Common myeloid progenitor, CD34-positive (primary cell): ENCODE measurements at regions of chr9 and their contacts with region 1.

Region 1: GRCh38 chr9:83636813-83637212 is 13.9 kb downstream of the IDNK start:
- DNase-seq: no peak
- H3K4me3 ChIP-seq: no peak overlapping the region
- H3K27ac ChIP-seq: no peak overlapping the region
- H3K4me1 ChIP-seq: no peaks in the 10 kb centered on the region
- H3K27me3 ChIP-seq: no peaks in the 10 kb centered on the region

Region 2: DNA sequence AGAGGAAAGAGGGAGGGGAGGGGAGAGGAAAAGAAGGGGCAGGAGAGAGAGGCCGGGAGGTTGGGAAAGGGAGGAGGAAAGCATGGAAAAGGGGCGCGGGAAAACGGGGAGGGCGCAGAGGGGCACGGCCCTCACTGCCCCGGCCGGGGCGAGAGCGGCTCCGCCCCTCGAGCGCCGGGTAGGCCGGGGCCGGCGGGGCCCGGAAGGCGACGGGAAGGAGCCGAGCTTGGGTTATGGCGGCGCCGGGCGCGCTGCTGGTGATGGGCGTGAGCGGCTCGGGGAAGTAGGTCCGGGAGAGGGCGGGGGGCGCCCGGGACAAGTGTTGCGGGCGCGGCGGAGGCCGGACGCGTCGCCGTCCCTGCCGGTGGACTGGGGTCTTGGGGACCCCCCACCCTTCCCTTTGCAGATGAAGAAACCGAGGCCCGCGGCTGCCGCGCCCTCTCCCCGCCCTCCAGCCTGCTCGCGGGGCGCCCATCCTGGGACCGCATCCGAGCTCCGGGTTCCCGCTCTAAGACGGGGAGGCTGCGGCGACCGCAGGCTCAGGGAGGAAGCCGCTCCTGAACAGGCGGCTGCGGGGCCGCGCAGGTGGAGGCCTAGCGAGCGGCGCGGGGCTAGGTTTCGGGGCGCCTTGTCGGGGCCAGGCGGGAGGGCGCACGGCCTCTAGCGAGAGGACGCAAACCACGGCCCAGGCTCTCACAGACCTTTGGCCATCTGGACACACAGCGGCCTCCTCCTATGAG is 13.7 kb before region 1 on chr9 and contains the start of gene IDNK:
- CTCF ChIA-PET with region 1: interaction called, 67 read pairs
- POLR2A ChIA-PET with region 1: no interaction called
- DNase-seq: peak; percentile 66 to 84 (median 71)
- H3K4me3 ChIP-seq: peak within 1 kb of the TSS; percentile 68 to 95 (median 81)
- H3K27ac ChIP-seq: peak within 1 kb of the TSS; percentile 86 to 92
- H3K4me1 ChIP-seq: peaks cover 4 to 40% (median 28%) of the 10 kb centered on the region in 4 experiments
- H3K27me3 ChIP-seq: no peaks in the 10 kb centered on the region